WTC11 (cell line): ENCODE measurements at regions of chr3 and their contacts with region 1.

Region 1: DNA sequence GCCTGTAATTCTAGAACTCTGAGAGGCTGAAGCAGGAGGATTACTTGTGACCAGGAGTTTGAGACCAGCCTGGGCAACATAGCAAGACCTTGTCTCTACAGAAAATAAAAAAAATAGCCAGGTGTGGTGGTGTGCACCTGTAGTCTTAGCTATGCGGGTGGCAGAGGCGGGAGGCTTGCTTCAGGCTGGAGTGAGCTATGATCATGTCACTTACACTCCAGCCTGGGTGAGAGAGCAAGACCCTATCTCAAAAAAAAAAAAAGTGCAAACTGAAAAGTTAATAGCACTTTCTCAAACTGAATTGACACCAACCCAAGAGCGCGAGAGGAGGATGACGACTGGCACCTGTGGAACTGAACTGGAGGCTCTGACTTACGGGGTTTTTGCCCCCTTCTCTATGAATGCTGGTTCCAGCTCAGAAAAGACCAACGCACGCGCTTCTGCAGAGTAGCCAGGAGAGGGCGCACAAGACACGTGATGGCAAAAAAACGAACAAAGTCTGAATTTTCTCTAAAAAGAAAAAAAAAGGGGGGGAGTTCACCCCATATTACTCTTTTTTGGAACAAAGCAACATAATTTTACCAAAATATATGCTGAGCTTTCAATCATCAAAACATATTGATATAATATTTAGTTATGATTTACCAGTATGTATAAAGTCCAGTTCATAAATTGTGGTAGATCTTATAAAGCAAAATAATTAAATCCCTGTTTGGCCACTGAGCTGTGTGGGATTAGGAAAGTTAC is 23.7 kb downstream of the CFAP92 start:
- DNase-seq: peak; percentile 69
- ATAC-seq: peak; percentile 81
- H3K4me3 Mint-ChIP-seq: no peak overlapping the region
- H3K27ac Mint-ChIP-seq: no peak overlapping the region
- H3K4me1 Mint-ChIP-seq: no peaks in the 10 kb centered on the region
- H3K27me3 Mint-ChIP-seq: no peaks in the 10 kb centered on the region
- CTCF ChIP-seq: peak; percentile 71

Region 2: DNA sequence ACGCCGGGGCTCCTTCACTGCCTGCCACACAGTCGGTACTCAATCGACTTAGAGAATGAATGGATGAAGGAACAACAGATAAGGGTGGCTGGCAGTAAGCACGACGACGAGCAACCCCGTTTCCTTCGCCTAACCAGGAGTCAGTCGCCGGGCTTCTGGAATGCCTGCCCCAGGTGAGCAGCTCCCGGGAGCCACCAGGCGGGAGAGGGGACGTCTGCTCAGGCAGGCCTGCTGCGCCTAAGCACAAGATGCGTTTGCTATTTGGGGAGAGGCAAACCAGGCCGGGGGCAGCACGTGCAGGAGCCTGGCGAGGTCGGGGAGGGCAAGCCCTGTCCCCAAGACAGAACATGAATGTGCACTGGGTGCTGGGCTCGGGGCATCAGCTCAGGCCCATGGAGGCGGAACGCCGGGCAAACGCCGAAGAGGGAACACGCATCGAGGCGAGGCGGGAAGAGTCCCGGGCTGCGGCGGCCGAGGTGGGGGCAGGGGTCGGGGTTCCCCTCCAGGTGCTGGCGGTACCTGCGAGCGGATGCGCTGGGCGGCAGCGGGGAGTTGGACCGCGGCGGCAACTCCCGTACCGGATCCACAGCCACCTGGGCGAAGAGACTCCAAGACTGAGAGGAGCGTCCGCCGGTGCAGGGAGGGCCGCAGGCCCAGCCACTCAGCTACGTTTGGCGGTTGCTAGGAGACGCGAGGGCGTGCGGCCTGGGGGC is 23.5 kb after region 1 on chr3 and contains the start of gene CFAP92:
- CTCF ChIA-PET with region 1: interaction called, 56 read pairs
- POLR2A ChIA-PET with region 1: interaction called, 4 read pairs
- DNase-seq: peak; percentile 96
- ATAC-seq: peak; percentile 91
- H3K4me3 Mint-ChIP-seq: peak within 1 kb of the TSS; percentile 77
- H3K27ac Mint-ChIP-seq: no peak within 1 kb of the TSS
- H3K4me1 Mint-ChIP-seq: peaks cover 18% of the 10 kb centered on the region
- H3K27me3 Mint-ChIP-seq: peaks cover 71% of the 10 kb centered on the region
- CTCF ChIP-seq: no peak
- total RNA-seq, gene CFAP92: 2.3 to 2.9 TPM (median 2.6 TPM) in 3 replicates

Region 3: GRCh38 chr3:129026728-129027543 is 56.8 kb after region 1 on chr3:
- CTCF ChIA-PET with region 1: interaction called, 25 read pairs
- POLR2A ChIA-PET with region 1: no interaction called
- DNase-seq: peak; percentile 81
- ATAC-seq: peak; percentile 97
- H3K4me3 Mint-ChIP-seq: peak overlapping the region; percentile 46
- H3K27ac Mint-ChIP-seq: no peak overlapping the region
- H3K4me1 Mint-ChIP-seq: peaks cover 5% of the 10 kb centered on the region; the same call in 1 of the 2 replicates
- H3K27me3 Mint-ChIP-seq: peaks cover 53% of the 10 kb centered on the region
- CTCF ChIP-seq: no peak

Region 4: DNA sequence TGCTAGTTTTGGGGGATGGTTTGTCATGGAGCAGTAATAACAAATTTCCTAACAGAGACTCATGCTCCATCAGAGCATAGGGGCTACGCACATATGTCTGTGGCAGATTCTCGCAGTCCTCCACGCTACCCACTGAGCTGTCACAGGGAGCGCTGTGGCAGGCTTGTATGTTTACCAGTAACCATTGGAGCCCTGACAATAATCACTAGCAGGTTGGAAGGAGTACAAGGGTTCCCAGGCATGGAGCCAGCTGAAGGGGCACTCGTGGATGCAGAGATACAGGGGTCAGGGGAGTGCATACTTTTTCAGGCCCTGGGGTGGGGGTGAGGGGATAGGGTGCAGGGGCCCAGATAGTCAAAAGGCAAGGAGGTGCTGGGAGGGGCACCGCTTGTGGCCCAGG is 82.5 kb after region 1 on chr3:
- CTCF ChIA-PET with region 1: interaction called, 70 read pairs
- POLR2A ChIA-PET with region 1: no interaction called
- DNase-seq: no peak
- ATAC-seq: no peak
- H3K4me3 Mint-ChIP-seq: no peak overlapping the region
- H3K27ac Mint-ChIP-seq: no peak overlapping the region
- H3K4me1 Mint-ChIP-seq: 0 out of 2 replicates have a peak, but pooled peaks cover 3% of the 10 kb centered on the region
- H3K27me3 Mint-ChIP-seq: peaks cover 13% of the 10 kb centered on the region
- CTCF ChIP-seq: no peak

Region 5: DNA sequence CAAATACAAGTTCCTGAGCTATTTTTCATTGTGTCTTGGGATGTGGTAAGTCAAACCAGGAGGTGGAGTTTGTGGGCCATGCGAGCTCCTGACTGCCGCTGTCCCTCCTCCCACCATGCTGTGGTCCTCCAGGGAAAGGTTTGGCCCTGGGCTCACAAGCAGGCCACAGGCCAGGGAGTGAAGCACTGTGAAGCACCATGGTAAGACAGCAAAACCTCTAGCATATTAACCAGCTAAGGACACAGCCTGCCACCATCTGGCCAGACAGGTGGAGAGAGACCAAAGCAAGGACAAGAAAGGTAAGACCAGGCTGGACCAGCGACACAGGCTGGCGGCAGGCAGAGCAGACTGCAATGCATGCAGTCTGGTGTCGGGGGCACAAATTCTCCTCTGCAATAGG is 136.2 kb after region 1 on chr3:
- CTCF ChIA-PET with region 1: interaction called, 13 read pairs
- POLR2A ChIA-PET with region 1: no interaction called
- DNase-seq: peak; percentile 25
- ATAC-seq: peak; percentile 53
- H3K4me3 Mint-ChIP-seq: no peak overlapping the region
- H3K27ac Mint-ChIP-seq: no peak overlapping the region
- H3K4me1 Mint-ChIP-seq: no peaks in the 10 kb centered on the region
- H3K27me3 Mint-ChIP-seq: no peaks in the 10 kb centered on the region
- CTCF ChIP-seq: no peak

Region 6: GRCh38 chr3:129249276-129250065 is 279.3 kb after region 1 on chr3 and contains the start of gene COPG1:
- CTCF ChIA-PET with region 1: interaction called, 48 read pairs
- POLR2A ChIA-PET with region 1: no interaction called
- DNase-seq: peak; percentile 83
- ATAC-seq: peak; percentile 88
- H3K4me3 Mint-ChIP-seq: peak within 1 kb of the TSS; percentile 88
- H3K27ac Mint-ChIP-seq: peak within 1 kb of the TSS; percentile 79
- H3K4me1 Mint-ChIP-seq: peaks cover 15% of the 10 kb centered on the region
- H3K27me3 Mint-ChIP-seq: no peaks in the 10 kb centered on the region
- CTCF ChIP-seq: no peak
- total RNA-seq, gene COPG1: 121 to 132 TPM (median 129 TPM) in 3 replicates